GM12878 (cell line): ENCODE measurements at regions of chr6 and their contacts with region 1.

Region 1: DNA sequence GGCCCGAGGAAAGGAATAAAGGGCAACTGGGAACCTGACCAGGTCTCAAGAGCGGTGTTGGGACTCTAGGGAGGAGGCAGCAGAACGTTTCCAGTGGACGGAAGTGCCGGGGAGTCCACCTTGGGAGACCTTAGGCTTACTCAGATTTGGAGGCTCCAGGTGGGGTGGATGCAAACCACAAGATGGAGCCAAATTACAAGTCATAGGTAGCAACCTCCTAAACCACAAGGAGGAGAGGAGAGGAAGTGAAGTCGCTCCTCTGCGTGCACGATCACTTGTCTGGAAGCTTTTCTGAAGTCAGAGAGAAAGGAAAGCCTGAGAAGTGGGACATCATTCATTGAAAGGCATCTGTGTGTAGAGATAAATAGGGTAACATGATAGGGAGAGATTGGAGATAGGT is 9.3 kb downstream of the HLA-DOA start:
- DNase-seq: no peak
- ATAC-seq: peak; percentile 89
- H3K4me3 ChIP-seq: no peak overlapping the region
- H3K27ac ChIP-seq: no peak overlapping the region
- H3K4me1 ChIP-seq: peaks cover 7% of the 10 kb centered on the region; the same call in 1 of the 2 replicates
- H3K27me3 ChIP-seq: no peaks in the 10 kb centered on the region
- CTCF ChIP-seq: peak; percentile 51 to 60 (median 53)
- EP300 ChIP-seq: no peak
- POLR2A ChIP-seq: no peak
- RAD21 ChIP-seq: peak; percentile 73

Region 2: GRCh38 chr6:33091957-33092356 is 91.9 kb after region 1 on chr6:
- CTCF ChIA-PET with region 1: interaction called, 4 read pairs
- POLR2A ChIA-PET with region 1: no interaction called
- RAD21 ChIA-PET with region 1: interaction called, 3 read pairs
- SMC1A ChIA-PET with region 1: interaction called, 10 read pairs
- in situ Hi-C with region 1: no loop called
- intact Hi-C with region 1: no loop called
- DNase-seq: no peak
- ATAC-seq: peak; percentile 95
- H3K4me3 ChIP-seq: no peak overlapping the region
- H3K27ac ChIP-seq: no peak overlapping the region
- H3K4me1 ChIP-seq: no peaks in the 10 kb centered on the region
- H3K27me3 ChIP-seq: no peaks in the 10 kb centered on the region
- CTCF ChIP-seq: peak; percentile 77 to 88 (median 80)
- EP300 ChIP-seq: no peak
- POLR2A ChIP-seq: 0 out of 2 replicates have a peak, but pooled peaks have one; percentile 41
- RAD21 ChIP-seq: peak; percentile 58

Region 3: GRCh38 chr6:33112148-33112547 is 112.1 kb after region 1 on chr6:
- CTCF ChIA-PET with region 1: interaction called, 4 read pairs
- POLR2A ChIA-PET with region 1: interaction called, 10 read pairs
- RAD21 ChIA-PET with region 1: no interaction called
- SMC1A ChIA-PET with region 1: interaction called, 3 read pairs
- in situ Hi-C with region 1: no loop called
- intact Hi-C with region 1: no loop called
- DNase-seq: peak; percentile 68
- ATAC-seq: peak; percentile 97
- H3K4me3 ChIP-seq: no peak overlapping the region
- H3K27ac ChIP-seq: peak overlapping the region; percentile 41
- H3K4me1 ChIP-seq: peaks cover 40% of the 10 kb centered on the region
- H3K27me3 ChIP-seq: no peaks in the 10 kb centered on the region; a peak in 2 of 4 replicates
- CTCF ChIP-seq: no peak
- EP300 ChIP-seq: no peak
- POLR2A ChIP-seq: no peak
- RAD21 ChIP-seq: no peak